ENCODE measurements at regions of chr1 and their contacts with region 1.

Region 1: DNA sequence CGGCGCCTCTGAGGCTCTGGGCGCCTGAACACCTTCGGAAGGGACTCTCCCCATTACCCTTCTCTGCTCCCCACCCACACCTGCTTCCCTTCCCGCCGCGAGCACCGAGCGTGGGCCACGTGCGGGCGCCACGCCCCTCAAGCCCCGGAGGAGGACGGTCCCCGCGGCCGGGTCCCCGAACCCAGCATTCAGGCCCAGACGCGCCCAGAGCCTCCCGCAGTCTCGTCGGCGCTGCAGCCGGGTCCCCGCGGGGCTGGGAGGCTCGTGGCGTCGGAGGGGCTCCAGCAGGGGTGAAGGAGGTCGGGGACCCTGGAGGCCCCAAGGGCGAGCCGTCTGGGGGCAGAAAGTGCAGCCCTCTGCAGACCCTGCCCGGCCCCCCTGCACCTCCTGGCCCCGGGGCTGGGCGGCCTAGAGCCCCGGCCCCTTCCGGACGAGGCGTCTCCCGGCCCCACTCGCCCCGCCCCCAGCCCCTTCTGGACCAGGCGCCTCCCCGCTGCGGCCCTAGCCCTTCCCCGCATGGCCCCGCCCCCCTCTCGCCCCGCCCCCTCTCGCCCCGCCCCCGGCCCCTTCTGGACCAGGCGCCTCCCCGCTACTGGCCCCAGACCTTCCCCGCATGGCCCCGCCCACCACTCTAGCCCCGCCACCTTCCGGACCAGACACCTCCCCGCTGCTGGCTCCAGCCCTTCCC is 378 bp upstream of the SMIM1 start:
- DNase-seq: peak; percentile 72
- H3K4me3 ChIP-seq: peak overlapping the region; percentile 35 to 51 (median 49)
- H3K27ac ChIP-seq: no peak overlapping the region
- H3K4me1 ChIP-seq: peaks cover 6% of the 10 kb centered on the region
- H3K27me3 ChIP-seq: no peaks in the 10 kb centered on the region
- CTCF ChIP-seq: no peak
- POLR2A ChIP-seq: no peak

Region 2: GRCh38 chr1:3746830-3747521 is 25.2 kb before region 1 on chr1:
- CTCF ChIA-PET with region 1: no interaction called
- POLR2A ChIA-PET with region 1: no interaction called
- dilution Hi-C with region 1: no loop called
- intact Hi-C with region 1: loop called (anchors 2 kb)
- DNase-seq: peak; percentile 77
- H3K4me3 ChIP-seq: peak overlapping the region; percentile 67 to 79 (median 74)
- H3K27ac ChIP-seq: peak overlapping the region; percentile 24
- H3K4me1 ChIP-seq: peaks cover 11% of the 10 kb centered on the region
- H3K27me3 ChIP-seq: peaks cover 0 to 7% of the 10 kb centered on the region in 2 experiments
- CTCF ChIP-seq: no peak
- POLR2A ChIP-seq: peak; percentile 85

Measured in endothelial cell of umbilical vein (primary cell).